Cardiac septum (tissue), 1 donor: ENCODE measurements at regions of chr5 and their contacts with region 1.

Region 1: DNA sequence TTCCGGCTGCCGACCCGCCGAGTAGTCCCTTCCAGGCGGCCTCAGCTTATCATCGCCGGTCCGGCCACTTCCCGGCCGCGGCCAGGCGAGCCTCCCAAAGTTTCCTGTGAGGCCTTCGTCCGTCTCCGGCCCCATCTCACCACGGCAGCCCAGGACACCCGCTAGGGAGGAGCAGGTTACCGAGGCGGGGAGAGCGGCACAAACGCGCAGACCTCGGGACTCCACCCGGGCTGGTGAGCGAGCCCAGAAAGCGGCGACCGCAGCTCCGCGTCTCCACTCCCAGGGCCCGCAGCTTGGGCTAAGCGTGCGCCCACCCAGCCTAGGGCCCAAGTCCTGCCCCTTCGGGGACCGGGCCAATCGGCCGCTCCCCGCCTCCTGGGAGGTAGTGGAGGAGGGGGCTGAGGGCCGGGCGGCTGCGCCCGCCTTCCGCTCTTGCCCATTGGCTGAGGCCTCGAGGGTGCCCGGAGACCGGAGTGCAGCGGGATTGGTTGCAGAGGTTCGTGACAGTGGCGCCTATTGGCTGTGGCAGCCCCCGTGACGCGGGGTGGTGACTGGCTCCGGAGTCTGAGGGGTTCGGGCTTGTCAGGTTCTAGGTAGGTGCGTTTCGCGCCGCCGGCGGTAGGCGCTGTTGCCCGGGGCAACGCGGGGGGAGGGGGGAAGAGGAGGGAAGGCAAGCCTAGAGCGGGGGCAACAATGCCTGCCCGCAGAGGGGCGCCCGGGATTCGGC is 867 bp downstream of the FER start:
- DNase-seq: peak; percentile 100

Region 2: DNA sequence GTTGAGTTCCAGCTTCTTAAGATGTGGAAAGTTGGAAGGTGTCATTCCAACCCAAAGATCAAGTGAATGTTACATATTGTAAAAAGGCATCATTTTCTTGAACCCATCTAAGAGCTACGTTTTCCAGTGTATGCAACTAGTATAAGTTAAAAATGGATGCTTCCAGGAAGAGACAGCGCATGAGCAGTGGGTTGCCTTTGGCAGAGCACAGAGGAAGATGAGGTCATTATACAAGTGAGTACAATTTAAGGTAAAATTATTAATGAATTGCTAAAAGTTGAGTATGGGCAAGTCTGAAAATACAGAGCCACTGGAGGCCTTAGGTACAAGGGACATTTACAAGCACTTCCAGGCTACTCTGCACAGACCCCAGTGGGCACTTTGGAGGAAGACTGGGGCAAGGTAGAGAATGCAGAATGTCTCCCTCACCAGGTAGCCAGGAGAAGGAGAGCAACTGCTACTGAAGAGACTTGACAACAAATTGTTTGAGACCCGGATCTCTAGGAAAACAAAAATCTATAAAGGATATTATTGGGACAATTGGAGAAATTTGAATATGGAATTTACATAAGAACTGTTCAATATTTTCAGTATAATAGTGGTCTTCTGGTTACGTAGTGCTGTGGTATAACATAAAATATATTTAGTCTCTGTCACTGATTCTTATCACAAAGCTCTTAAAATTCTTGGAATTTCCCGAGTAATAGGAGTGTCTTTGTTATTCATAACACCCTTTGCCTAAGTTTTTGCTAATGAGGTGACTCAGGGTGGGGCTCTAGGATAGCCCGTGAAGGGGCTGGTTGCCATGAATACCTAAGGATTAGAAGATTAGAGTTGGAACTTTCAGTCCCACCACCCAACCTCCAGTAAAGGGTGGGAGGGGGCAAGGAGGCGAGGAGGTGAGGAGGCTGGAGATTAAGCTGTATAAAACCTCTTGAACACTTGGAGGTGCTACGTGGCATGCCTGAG is 130.8 kb before region 1 on chr5:
- intact Hi-C with region 1: no loop called
- DNase-seq: no peak

Region 3: GRCh38 chr5:108727651-108728565 is 20.7 kb before region 1 on chr5:
- intact Hi-C with region 1: loop called (anchors 1 kb)
- DNase-seq: peak; percentile 95

Region 4: DNA sequence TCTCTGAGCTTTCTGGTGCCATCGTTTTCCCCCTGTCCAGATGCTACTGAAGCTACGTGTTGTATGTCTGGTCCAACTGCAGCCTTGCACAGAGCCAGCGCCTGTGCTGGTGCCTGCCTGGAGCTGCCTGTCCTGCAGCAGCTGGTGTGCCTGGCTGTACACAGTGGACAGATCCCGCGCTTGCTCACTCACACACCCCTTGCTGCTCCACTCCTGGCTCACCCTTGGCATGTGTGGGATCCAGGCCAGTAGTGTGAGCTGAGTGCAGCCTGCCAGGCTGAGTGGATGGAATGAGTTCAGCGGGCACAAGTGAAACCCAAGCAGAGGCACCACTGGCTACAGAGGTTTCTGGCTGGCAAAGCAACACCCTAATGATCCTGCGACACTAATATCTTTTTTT is 39.6 kb after region 1 on chr5:
- intact Hi-C with region 1: loop called (anchors 5 kb)
- DNase-seq: peak; percentile 80

Region 5: DNA sequence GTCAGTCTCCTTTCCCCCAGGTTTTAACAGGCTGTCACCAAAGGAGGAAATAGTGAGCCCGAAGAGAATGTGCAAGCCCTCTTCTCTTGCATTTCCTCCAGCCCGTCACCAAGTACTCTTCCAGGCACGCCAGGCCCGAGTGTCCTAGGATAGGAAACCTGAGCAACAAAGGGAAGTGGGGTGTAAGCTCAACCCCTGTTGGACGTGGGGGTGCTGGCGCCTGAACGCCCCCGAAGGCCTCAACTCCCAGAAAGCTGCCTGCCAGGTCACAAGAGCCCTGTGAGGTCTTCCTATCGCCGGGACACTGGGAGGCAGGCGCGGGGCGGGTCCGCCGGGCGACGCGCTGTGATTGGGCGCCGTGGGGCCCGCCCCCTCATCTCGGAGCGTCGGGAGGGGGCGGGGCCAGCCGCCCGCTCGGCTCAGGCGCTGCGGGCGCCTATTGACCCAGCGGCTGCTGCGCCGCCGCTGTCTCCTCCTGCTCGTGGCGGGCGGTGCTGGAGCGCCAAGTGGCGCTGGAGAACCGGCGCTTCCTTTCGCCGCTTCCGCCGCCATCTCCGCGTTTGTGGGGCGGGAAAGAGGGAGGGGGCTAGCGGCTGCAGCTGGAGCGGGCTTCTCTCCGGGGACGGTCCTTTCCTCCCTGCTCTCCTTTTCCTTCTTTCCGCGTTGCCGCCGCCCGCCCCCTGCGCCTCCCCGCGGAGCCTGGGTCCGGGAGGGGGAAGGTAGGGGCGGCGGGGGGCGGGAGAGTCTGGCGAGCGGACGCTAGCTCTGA is 940.6 kb after region 1 on chr5:
- intact Hi-C with region 1: loop called (anchors 2 kb)
- DNase-seq: peak; percentile 94